K562 (cell line): ENCODE measurements at regions of chr1 and their contacts with region 1.

Region 1: GRCh38 chr1:248807067-248807737 is 18.5 kb downstream of the SH3BP5L start:
- DNase-seq: peak; percentile 70 to 77 (median 74)
- ATAC-seq: peak; percentile 95
- H3K4me3 ChIP-seq: no peak overlapping the region
- H3K27ac ChIP-seq: no peak overlapping the region
- H3K4me1 ChIP-seq: peaks cover 11 to 15% of the 10 kb centered on the region in 2 experiments; a peak in 3 of 5 replicates
- H3K27me3 ChIP-seq: peaks cover 0 to 10% of the 10 kb centered on the region in 2 experiments; a peak in 2 of 5 replicates
- CTCF ChIP-seq: peak; percentile 88 to 94 (median 92)
- EP300 ChIP-seq: no peak
- POLR2A ChIP-seq: no peak
- RAD21 ChIP-seq: peak; percentile 96 to 98

Region 2: DNA sequence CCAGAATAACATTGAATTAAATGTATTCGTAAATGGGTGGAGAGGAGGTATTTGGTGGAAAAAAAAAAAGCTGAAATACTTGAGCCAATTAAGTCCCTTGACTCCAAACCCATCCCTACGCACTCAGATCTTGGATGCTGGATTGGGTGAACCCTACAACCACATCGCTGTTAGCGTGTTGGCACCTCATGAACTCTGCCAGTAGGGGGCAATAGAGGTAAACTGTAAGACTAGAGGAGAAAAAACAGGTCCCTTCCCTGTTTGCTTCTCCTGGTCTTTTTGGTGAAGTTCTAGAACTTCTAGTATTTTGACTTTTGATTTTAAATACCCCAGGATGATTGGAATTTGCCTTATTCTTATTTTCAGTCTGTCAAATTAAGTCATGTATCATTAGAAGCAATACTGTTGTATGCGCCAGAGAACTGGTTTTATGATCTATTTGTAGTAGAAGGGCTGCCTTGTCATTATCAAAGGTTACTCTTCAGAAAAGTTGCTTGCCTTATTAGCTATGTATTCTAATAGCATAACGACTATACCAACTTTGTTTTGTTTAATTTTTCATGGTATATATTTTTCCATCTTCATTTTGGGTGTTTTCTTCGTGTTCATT is 1125.8 kb before region 1 on chr1:
- CTCF ChIA-PET with region 1: no interaction called
- POLR2A ChIA-PET with region 1: no interaction called
- in situ Hi-C with region 1: no loop called
- intact Hi-C with region 1: loop called (anchors 1 kb)
- DNase-seq: peak; percentile 52 to 79 (median 54)
- ATAC-seq: peak; percentile 91
- H3K4me3 ChIP-seq: no peak overlapping the region
- H3K27ac ChIP-seq: no peak overlapping the region
- H3K4me1 ChIP-seq: no peaks in the 10 kb centered on the region
- H3K27me3 ChIP-seq: no peaks in the 10 kb centered on the region
- CTCF ChIP-seq: peak; percentile 67 to 87 (median 71)
- EP300 ChIP-seq: no peak
- POLR2A ChIP-seq: no peak
- RAD21 ChIP-seq: peak; percentile 76 to 80

Region 3: DNA sequence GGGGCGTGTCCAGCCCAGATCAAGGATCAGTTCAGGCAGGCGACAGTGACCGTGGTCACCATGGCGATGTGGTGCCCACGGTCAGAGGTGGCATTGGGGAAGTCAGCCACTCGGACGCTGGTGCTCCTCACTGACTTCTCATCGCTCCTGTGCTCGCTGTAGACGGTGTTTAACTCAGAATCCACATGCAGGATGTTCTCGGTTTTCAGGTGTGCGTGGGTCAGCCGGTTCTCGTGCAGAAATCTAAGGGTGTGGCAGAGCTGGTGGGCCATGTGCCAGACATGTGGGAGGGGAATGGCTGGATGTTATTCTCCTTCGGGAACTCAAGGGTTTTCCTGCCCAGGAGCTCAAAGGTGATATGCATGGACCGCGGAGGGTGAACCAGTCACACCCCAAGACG is 870.8 kb before region 1 on chr1:
- CTCF ChIA-PET with region 1: interaction called, 3 read pairs
- POLR2A ChIA-PET with region 1: no interaction called
- in situ Hi-C with region 1: no loop called
- intact Hi-C with region 1: loop called (anchors 5 kb)
- DNase-seq: no peak
- ATAC-seq: no peak
- H3K4me3 ChIP-seq: no peak overlapping the region
- H3K27ac ChIP-seq: no peak overlapping the region
- H3K4me1 ChIP-seq: peaks cover 0 to 11% of the 10 kb centered on the region in 2 experiments; a peak in 2 of 5 replicates
- H3K27me3 ChIP-seq: no peaks in the 10 kb centered on the region
- CTCF ChIP-seq: no peak
- EP300 ChIP-seq: no peak
- POLR2A ChIP-seq: no peak
- RAD21 ChIP-seq: no peak

Region 4: GRCh38 chr1:248622570-248623001 is 184.6 kb before region 1 on chr1:
- CTCF ChIA-PET with region 1: interaction called, 5 read pairs
- POLR2A ChIA-PET with region 1: no interaction called
- in situ Hi-C with region 1: no loop called
- intact Hi-C with region 1: loop called (anchors 1 kb)
- DNase-seq: peak; percentile 6 to 14 (median 12)
- ATAC-seq: peak; percentile 65; the same call in 2 of the 3 replicates
- H3K4me3 ChIP-seq: no peak overlapping the region
- H3K27ac ChIP-seq: no peak overlapping the region
- H3K4me1 ChIP-seq: no peaks in the 10 kb centered on the region
- H3K27me3 ChIP-seq: no peaks in the 10 kb centered on the region
- CTCF ChIP-seq: peak; percentile 9 to 35 (median 19); a peak in 2 of 6 replicates
- EP300 ChIP-seq: no peak
- POLR2A ChIP-seq: no peak
- RAD21 ChIP-seq: peak; percentile 34 to 63; a peak in 3 of 4 replicates

Region 5: GRCh38 chr1:248757784-248758195 is 49.4 kb before region 1 on chr1:
- CTCF ChIA-PET with region 1: no interaction called
- POLR2A ChIA-PET with region 1: interaction called, 3 read pairs
- in situ Hi-C with region 1: no loop called
- intact Hi-C with region 1: loop called (anchors 5 kb)
- DNase-seq: no peak
- ATAC-seq: peak; percentile 30; the same call in 2 of the 3 replicates
- H3K4me3 ChIP-seq: no peak overlapping the region
- H3K27ac ChIP-seq: no peak overlapping the region
- H3K4me1 ChIP-seq: peaks cover 2 to 12% of the 10 kb centered on the region in 2 experiments; a peak in 3 of 5 replicates
- H3K27me3 ChIP-seq: no peaks in the 10 kb centered on the region
- CTCF ChIP-seq: no peak
- EP300 ChIP-seq: no peak
- POLR2A ChIP-seq: no peak
- RAD21 ChIP-seq: no peak